Breast epithelium (tissue), 4 donors: ENCODE measurements at regions of chr15 and their contacts with region 1.

Region 1: GRCh38 chr15:75483961-75484360 is 32.5 kb upstream of the SIN3A start:
- DNase-seq: no peak
- H3K4me3 ChIP-seq: no peak overlapping the region
- H3K27ac ChIP-seq: no peak overlapping the region
- H3K4me1 ChIP-seq: no peaks in the 10 kb centered on the region
- H3K27me3 ChIP-seq: no peaks in the 10 kb centered on the region
- CTCF ChIP-seq: no peak
- POLR2A ChIP-seq: no peak

Region 2: GRCh38 chr15:73495171-73495570 is 1988.8 kb before region 1 on chr15:
- intact Hi-C with region 1: no loop called
- DNase-seq: no peak
- H3K4me3 ChIP-seq: no peak overlapping the region
- H3K27ac ChIP-seq: no peak overlapping the region
- H3K4me1 ChIP-seq: no peaks in the 10 kb centered on the region
- H3K27me3 ChIP-seq: no peaks in the 10 kb centered on the region
- CTCF ChIP-seq: no peak
- POLR2A ChIP-seq: no peak

Region 3: GRCh38 chr15:75410196-75410595 is 73.8 kb before region 1 on chr15:
- intact Hi-C with region 1: loop called (anchors 5 kb)
- DNase-seq: no peak
- H3K4me3 ChIP-seq: no peak overlapping the region
- H3K27ac ChIP-seq: no peak overlapping the region
- H3K4me1 ChIP-seq: no peaks in the 10 kb centered on the region
- H3K27me3 ChIP-seq: no peaks in the 10 kb centered on the region
- CTCF ChIP-seq: no peak
- POLR2A ChIP-seq: no peak

Region 4: GRCh38 chr15:76667943-76668715 is 1184.2 kb after region 1 on chr15:
- intact Hi-C with region 1: no loop called
- DNase-seq: no peak
- H3K4me3 ChIP-seq: no peak overlapping the region
- H3K27ac ChIP-seq: no peak overlapping the region
- H3K4me1 ChIP-seq: no peaks in the 10 kb centered on the region
- H3K27me3 ChIP-seq: no peaks in the 10 kb centered on the region
- CTCF ChIP-seq: no peak
- POLR2A ChIP-seq: no peak